Caco-2 (cell line): ENCODE measurements at regions of chr12 and their contacts with region 1.

Region 1: GRCh38 chr12:130747867-130748740 is 32.0 kb upstream of the RIMBP2 start:
- DNase-seq: peak; percentile 75 to 84
- H3K4me3 ChIP-seq: no peak overlapping the region
- H3K4me3 Mint-ChIP-seq: no peak overlapping the region
- H3K27ac Mint-ChIP-seq: no peak overlapping the region
- H3K4me1 ChIP-seq: no peaks in the 10 kb centered on the region
- H3K4me1 Mint-ChIP-seq: no peaks in the 10 kb centered on the region
- H3K27me3 ChIP-seq: no peaks in the 10 kb centered on the region
- H3K27me3 Mint-ChIP-seq: peaks cover 4% of the 10 kb centered on the region
- CTCF ChIP-seq: peak; percentile 86 to 89

Region 2: DNA sequence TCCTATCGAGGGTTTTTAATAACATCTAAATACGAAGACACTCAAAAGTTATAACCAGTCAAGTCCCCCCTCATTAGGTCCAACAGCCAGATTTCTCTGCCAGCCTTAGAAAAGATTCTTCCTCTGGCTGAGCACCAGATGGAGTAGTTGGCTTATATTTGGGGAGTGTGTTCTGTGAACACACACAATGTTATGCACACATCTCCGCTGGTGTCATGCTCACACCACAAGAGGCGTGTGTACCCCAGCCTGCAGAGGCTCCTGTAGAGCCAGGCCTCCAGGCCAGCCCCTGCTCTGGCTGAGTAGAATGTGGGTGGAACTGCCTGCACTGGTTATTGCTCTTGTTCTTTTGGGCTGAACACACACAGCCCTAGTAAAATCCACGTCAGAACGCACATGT is 346.4 kb before region 1 on chr12:
- CTCF ChIA-PET with region 1: no interaction called
- POLR2A ChIA-PET with region 1: no interaction called
- intact Hi-C with region 1: loop called (anchors 1 kb)
- DNase-seq: peak in 1 of 2 experiments; percentile 26
- H3K4me3 ChIP-seq: no peak overlapping the region
- H3K4me3 Mint-ChIP-seq: no peak overlapping the region
- H3K27ac Mint-ChIP-seq: no peak overlapping the region
- H3K4me1 ChIP-seq: peaks cover 11% of the 10 kb centered on the region
- H3K4me1 Mint-ChIP-seq: peaks cover 12% of the 10 kb centered on the region
- H3K27me3 ChIP-seq: no peaks in the 10 kb centered on the region
- H3K27me3 Mint-ChIP-seq: no peaks in the 10 kb centered on the region
- CTCF ChIP-seq: peak in 1 of 2 experiments; percentile 46

Region 3: DNA sequence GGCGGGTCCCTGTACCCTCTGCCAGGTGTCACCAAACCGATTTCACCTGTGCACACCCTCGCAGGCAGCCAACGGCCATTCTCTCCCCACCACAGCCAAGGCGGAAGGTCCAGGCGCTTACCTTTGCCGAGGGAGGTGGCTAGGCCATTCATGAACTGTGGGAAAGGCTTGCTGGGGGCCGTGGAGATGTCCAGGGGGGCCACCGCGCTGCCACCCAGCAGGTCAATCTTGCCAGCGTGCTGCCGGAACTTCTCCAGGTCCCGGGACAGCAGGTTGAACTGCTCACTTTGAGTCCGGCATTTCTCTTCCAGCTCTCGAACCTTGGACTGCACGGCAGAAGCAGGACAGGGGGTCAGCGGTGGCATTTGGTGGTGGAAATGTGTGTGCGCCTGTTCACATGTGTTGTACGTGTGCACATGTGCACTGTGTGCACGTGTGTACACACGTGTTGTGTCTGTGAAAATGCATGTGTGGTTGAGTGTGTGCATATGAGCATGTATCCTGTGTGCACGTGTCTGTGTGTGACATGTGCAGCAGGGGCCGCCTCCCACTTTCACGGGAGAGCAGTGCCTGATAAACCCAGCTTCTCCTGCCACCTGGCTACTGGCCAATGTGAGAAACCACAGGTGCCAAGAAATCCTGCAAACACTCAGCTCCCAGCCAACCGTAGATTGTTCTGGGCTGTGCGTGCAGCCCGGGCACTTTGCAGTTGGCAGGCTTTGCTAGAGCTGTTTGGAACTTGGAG is 291.6 kb before region 1 on chr12:
- CTCF ChIA-PET with region 1: no interaction called
- POLR2A ChIA-PET with region 1: no interaction called
- intact Hi-C with region 1: loop called (anchors 5 kb)
- DNase-seq: no peak
- H3K4me3 ChIP-seq: no peak overlapping the region
- H3K4me3 Mint-ChIP-seq: no peak overlapping the region
- H3K27ac Mint-ChIP-seq: no peak overlapping the region
- H3K4me1 ChIP-seq: no peaks in the 10 kb centered on the region
- H3K4me1 Mint-ChIP-seq: no peaks in the 10 kb centered on the region
- H3K27me3 ChIP-seq: no peaks in the 10 kb centered on the region
- H3K27me3 Mint-ChIP-seq: peaks cover 7% of the 10 kb centered on the region
- CTCF ChIP-seq: no peak

Region 4: GRCh38 chr12:130661486-130662255 is 86.4 kb before region 1 on chr12:
- CTCF ChIA-PET with region 1: no interaction called
- POLR2A ChIA-PET with region 1: no interaction called
- intact Hi-C with region 1: loop called (anchors 2 kb)
- DNase-seq: peak in 1 of 2 experiments; percentile 10
- H3K4me3 ChIP-seq: no peak overlapping the region
- H3K4me3 Mint-ChIP-seq: no peak overlapping the region
- H3K27ac Mint-ChIP-seq: no peak overlapping the region
- H3K4me1 ChIP-seq: 0 out of 2 replicates have a peak, but pooled peaks cover 3% of the 10 kb centered on the region
- H3K4me1 Mint-ChIP-seq: no peaks in the 10 kb centered on the region
- H3K27me3 ChIP-seq: no peaks in the 10 kb centered on the region
- H3K27me3 Mint-ChIP-seq: peaks cover 4% of the 10 kb centered on the region
- CTCF ChIP-seq: peak; percentile 12 to 18